Sigmoid colon (tissue), 7 donors: ENCODE measurements at regions of chr9 and their contacts with region 1.

Region 1: GRCh38 chr9:95875305-95876137 is at the start of gene ERCC6L2:
- DNase-seq: peak; percentile 98
- H3K4me3 ChIP-seq: no peak within 1 kb of the TSS
- H3K27ac ChIP-seq: no peak within 1 kb of the TSS
- H3K4me1 ChIP-seq: peaks cover 0 to 28% (median 16%) of the 10 kb centered on the region in 4 donors
- H3K27me3 ChIP-seq: no peaks in the 10 kb centered on the region
- CTCF ChIP-seq: peak in 1 of 4 experiments; percentile 8
- EP300 ChIP-seq: peak in 1 of 4 donors; percentile 28
- POLR2A ChIP-seq: peak; percentile 64 to 65
- total RNA-seq, gene ERCC6L2: 69.2 to 130 (median 73.6) TPM

Region 2: GRCh38 chr9:95317119-95317892 is 558.2 kb before region 1 on chr9 and contains the start of gene FANCC:
- intact Hi-C with region 1: loop called (anchors 5 kb)
- DNase-seq: peak; percentile 95
- H3K4me3 ChIP-seq: peak within 1 kb of the TSS; percentile 76 to 99 (median 79)
- H3K27ac ChIP-seq: peak within 1 kb of the TSS; percentile 91 to 99 (median 94)
- H3K4me1 ChIP-seq: peaks cover 0 to 13% (median 5%) of the 10 kb centered on the region in 4 donors
- H3K27me3 ChIP-seq: no peaks in the 10 kb centered on the region
- CTCF ChIP-seq: no peak
- EP300 ChIP-seq: peak in 1 of 4 donors; percentile 42
- POLR2A ChIP-seq: no peak
- total RNA-seq, gene FANCC: 3.9 to 10.6 (median 5.3) TPM

Region 3: GRCh38 chr9:95462249-95463147 is 413.0 kb before region 1 on chr9:
- intact Hi-C with region 1: loop called (anchors 5 kb)
- DNase-seq: peak; percentile 85
- H3K4me3 ChIP-seq: peak overlapping the region in 3 of 4 donors; percentile 11 to 30 (median 30)
- H3K27ac ChIP-seq: peak overlapping the region; percentile 38 to 79 (median 64)
- H3K4me1 ChIP-seq: peaks cover 0 to 68% (median 60%) of the 10 kb centered on the region in 4 donors
- H3K27me3 ChIP-seq: no peaks in the 10 kb centered on the region
- CTCF ChIP-seq: no peak
- EP300 ChIP-seq: no peak
- POLR2A ChIP-seq: no peak

Region 4: GRCh38 chr9:95510709-95511615 is 364.6 kb before region 1 on chr9:
- intact Hi-C with region 1: loop called (anchors 2 kb)
- DNase-seq: peak; percentile 96
- H3K4me3 ChIP-seq: peak overlapping the region; percentile 58 to 86 (median 76)
- H3K27ac ChIP-seq: peak overlapping the region; percentile 88 to 96 (median 93)
- H3K4me1 ChIP-seq: peaks cover 0 to 30% (median 16%) of the 10 kb centered on the region in 4 donors
- H3K27me3 ChIP-seq: peaks cover 0 to 6% (median 0%) of the 10 kb centered on the region in 3 donors
- CTCF ChIP-seq: no peak
- EP300 ChIP-seq: no peak
- POLR2A ChIP-seq: no peak

Region 5: DNA sequence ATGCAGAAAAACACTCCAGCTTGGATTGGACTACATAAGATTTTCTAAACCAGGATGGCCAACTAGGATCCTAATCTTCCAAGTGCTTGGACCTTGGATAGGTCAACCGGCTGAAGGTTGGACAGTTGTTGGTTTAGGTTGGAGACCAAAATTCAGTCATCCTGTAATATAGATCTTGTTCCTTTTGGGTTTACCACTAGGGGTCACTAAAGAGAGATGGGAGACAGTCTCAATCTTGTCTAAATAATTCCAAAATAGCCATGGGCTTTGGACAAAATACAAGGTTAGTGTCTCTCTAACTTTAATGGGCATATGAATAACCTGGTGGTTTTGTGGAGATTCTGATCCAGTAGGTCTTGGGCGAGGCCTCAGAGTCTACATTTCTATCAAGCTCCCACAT is 148.8 kb before region 1 on chr9:
- intact Hi-C with region 1: loop called (anchors 5 kb)
- DNase-seq: no peak
- H3K4me3 ChIP-seq: no peak overlapping the region
- H3K27ac ChIP-seq: no peak overlapping the region
- H3K4me1 ChIP-seq: peaks cover 0 to 6% (median 2%) of the 10 kb centered on the region in 4 donors
- H3K27me3 ChIP-seq: no peaks in the 10 kb centered on the region
- CTCF ChIP-seq: peak; percentile 28 to 62 (median 52)
- EP300 ChIP-seq: no peak
- POLR2A ChIP-seq: no peak

Region 6: DNA sequence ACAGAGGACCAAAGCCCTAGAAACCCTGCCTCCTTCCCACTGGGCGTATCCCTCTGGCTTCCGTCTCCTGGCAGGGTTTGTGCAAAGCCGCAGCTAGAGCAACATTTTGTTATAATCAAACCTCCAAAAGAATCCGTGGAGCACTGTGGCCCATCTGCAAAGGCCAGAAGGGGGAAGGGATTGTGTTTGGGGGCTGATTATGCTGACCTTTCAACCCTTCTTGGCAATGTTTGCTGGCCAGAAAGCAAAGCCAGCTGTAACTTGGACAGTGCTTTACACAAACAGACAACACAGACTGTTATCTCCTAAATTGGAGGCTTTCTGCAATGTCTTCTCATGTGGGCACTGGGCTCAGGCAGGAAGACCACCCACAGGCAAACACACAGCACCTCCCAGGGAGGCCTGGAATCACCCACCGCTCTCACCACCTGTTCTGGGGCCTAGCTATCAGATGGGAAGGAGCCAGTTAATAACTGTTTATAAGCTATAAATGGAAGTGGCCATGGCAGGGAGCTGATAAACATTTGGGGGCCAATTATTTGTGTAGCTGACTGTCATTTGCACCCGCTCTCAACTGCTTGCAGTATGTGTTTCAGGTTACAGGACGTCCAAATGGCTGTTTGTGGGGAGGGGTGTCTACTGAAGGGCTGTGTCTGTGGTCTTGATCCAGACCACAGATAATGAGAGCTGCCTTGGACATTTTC is 121.6 kb before region 1 on chr9:
- intact Hi-C with region 1: no loop called
- DNase-seq: peak; percentile 81
- H3K4me3 ChIP-seq: no peak overlapping the region
- H3K27ac ChIP-seq: peak overlapping the region in 3 of 4 donors; percentile 7 to 28 (median 20)
- H3K4me1 ChIP-seq: peaks cover 0 to 29% (median 21%) of the 10 kb centered on the region in 4 donors
- H3K27me3 ChIP-seq: peaks cover 0 to 20% (median 0%) of the 10 kb centered on the region in 3 donors
- CTCF ChIP-seq: no peak
- EP300 ChIP-seq: no peak
- POLR2A ChIP-seq: no peak

Region 7: DNA sequence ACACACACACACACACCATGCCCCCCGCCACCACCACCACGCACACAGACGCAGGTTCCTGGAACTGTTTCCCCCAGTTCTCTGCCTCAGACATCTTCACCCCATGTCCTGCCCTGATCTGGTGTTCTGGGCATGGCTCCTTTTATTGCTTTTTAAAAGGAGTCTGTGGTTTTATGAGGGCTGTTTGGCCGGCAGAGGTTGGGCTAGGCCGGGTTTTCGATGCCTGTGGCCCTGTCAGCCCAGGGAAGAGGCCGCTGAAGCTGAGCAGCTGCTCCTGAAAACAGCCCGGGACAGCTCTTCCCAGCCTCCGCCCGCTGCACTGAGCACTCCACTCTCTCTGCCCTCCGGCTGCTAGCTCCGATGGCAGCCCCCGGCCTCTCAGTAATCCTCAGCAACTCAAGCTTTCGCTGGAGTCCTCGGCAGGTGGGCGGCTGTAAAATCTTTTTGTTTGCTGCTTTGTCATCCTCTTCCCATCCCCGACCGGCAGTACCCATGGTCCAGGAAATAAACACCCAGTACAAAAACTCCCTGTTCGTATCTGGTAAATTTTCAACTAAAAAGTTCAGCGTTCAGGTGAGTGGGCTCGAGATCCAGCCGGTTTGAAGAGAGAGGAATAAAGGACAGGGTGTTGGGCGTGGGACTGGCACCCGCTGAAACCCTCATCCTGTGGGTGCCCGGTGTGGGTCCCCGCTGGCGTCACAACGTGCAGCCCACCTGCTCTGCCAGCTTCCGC is 103.0 kb before region 1 on chr9:
- intact Hi-C with region 1: loop called (anchors 5 kb)
- DNase-seq: peak; percentile 93
- H3K4me3 ChIP-seq: peak overlapping the region; percentile 11 to 25 (median 21)
- H3K27ac ChIP-seq: peak overlapping the region; percentile 70 to 85 (median 84)
- H3K4me1 ChIP-seq: peaks cover 0 to 39% (median 26%) of the 10 kb centered on the region in 4 donors
- H3K27me3 ChIP-seq: no peaks in the 10 kb centered on the region
- CTCF ChIP-seq: no peak
- EP300 ChIP-seq: peak in 3 of 4 donors; percentile 39 to 72 (median 52)
- POLR2A ChIP-seq: no peak